HCT116 (cell line): ENCODE measurements at regions of chr10 and their contacts with region 1.

Region 1: DNA sequence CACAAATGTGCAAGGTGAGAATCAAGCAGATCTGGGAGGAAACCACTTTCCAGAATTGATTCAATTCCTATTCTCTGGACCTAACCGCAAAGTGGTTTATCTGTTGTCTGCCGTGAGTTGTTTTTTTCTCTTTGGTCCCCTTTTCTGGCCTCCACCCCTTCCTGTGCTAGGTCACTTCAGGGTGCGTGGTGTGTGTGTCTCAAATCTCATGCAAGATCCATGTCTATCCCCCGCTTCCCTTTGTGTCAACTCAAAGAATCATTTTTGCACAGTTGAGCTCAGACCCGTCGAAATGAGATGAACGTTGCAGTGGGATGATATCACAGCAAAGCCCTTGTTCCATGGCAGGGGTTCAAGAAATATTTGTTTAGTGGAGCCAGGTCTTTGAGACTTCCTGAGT is 184.5 kb downstream of the GATA3 start:
- DNase-seq: no peak
- ATAC-seq: no peak
- H3K4me3 ChIP-seq: no peak overlapping the region
- H3K27ac ChIP-seq: no peak overlapping the region
- H3K4me1 ChIP-seq: no peaks in the 10 kb centered on the region
- H3K27me3 ChIP-seq: peaks cover 9% of the 10 kb centered on the region; the same call in 1 of the 2 replicates
- CTCF ChIP-seq: no peak
- POLR2A ChIP-seq: no peak
- RAD21 ChIP-seq: no peak

Region 2: DNA sequence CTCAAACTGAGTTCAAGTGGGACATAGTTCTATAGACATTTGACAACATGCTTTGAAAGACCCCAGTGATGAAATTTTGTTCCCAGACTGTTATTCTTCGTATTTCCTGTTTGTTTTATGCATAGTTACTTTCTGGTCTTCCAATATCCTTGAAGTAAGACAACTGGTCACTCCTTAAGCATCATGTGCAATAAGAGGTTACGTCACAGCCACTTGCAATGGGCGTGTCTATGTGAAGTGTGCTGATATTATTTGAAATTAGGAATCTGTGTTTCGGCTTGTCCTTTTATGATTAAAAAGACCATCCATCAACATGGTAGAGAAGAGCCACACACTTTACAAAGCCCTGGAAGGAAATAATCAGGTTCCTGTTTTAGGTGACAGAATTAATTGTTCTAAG is 34.4 kb before region 1 on chr10:
- CTCF ChIA-PET with region 1: no interaction called
- POLR2A ChIA-PET with region 1: no interaction called
- RAD21 ChIA-PET with region 1: no interaction called
- intact Hi-C with region 1: loop called (anchors 5 kb)
- DNase-seq: no peak
- ATAC-seq: no peak
- H3K4me3 ChIP-seq: no peak overlapping the region
- H3K27ac ChIP-seq: no peak overlapping the region
- H3K4me1 ChIP-seq: no peaks in the 10 kb centered on the region
- H3K27me3 ChIP-seq: peaks cover 4% of the 10 kb centered on the region; the same call in 1 of the 2 replicates
- CTCF ChIP-seq: no peak
- POLR2A ChIP-seq: no peak
- RAD21 ChIP-seq: no peak

Region 3: GRCh38 chr10:8424555-8425211 is 185.7 kb after region 1 on chr10:
- CTCF ChIA-PET with region 1: no interaction called
- POLR2A ChIA-PET with region 1: no interaction called
- RAD21 ChIA-PET with region 1: no interaction called
- intact Hi-C with region 1: no loop called
- DNase-seq: no peak
- ATAC-seq: no peak
- H3K4me3 ChIP-seq: no peak overlapping the region
- H3K27ac ChIP-seq: no peak overlapping the region
- H3K4me1 ChIP-seq: no peaks in the 10 kb centered on the region
- H3K27me3 ChIP-seq: no peaks in the 10 kb centered on the region
- CTCF ChIP-seq: no peak
- POLR2A ChIP-seq: no peak
- RAD21 ChIP-seq: no peak

Region 4: GRCh38 chr10:8584666-8585065 is 345.7 kb after region 1 on chr10:
- CTCF ChIA-PET with region 1: no interaction called
- POLR2A ChIA-PET with region 1: no interaction called
- RAD21 ChIA-PET with region 1: no interaction called
- intact Hi-C with region 1: no loop called
- DNase-seq: no peak
- ATAC-seq: no peak
- H3K4me3 ChIP-seq: no peak overlapping the region
- H3K27ac ChIP-seq: no peak overlapping the region
- H3K4me1 ChIP-seq: no peaks in the 10 kb centered on the region
- H3K27me3 ChIP-seq: no peaks in the 10 kb centered on the region
- CTCF ChIP-seq: no peak
- POLR2A ChIP-seq: no peak
- RAD21 ChIP-seq: no peak